ENCODE measurements at regions of chr22 and their contacts with region 1.

Region 1: DNA sequence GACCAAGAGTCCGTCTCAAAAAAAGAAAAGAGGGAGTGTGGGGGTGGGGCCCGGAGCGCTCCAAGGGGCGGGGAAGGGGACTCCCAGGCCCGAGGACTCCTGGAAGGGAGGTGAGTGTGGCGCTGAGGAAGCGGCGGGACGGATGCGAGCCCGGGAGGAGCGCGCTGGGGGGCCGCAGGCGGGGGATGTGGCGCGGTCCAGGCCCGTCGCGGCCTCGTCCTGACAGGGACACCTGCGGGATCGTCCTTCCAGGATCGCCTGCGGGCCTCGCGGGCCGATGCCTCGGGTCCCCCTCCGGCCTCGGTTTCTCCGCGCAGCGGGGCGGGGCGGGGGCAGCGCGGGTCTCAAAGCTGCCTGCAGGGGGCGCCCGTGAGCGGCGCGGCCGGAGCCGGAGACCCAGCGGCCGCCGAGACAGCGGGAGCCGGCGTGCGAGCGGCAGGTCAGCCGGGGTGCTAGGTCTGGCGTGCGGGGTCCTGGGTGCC is 3.8 kb upstream of the ADORA2A start:
- DNase-seq: peak in 8 of 9 donors; percentile 35 to 87 (median 58)
- ATAC-seq: peak; percentile 52
- H3K4me3 ChIP-seq: no peak overlapping the region
- H3K4me3 Mint-ChIP-seq: peak overlapping the region; percentile 49 to 90 (median 62)
- H3K27ac ChIP-seq: peak overlapping the region; percentile 56
- H3K27ac Mint-ChIP-seq: peak overlapping the region in 5 of 9 donors; percentile 43 to 86 (median 74)
- H3K4me1 ChIP-seq: peaks cover 19 to 29% of the 10 kb centered on the region in 2 donors
- H3K4me1 Mint-ChIP-seq: peaks cover 28 to 39% (median 37%) of the 10 kb centered on the region in 7 donors
- H3K27me3 ChIP-seq: no peaks in the 10 kb centered on the region
- H3K27me3 Mint-ChIP-seq: peaks cover 0 to 5% (median 0%) of the 10 kb centered on the region in 5 donors

Region 2: GRCh38 chr22:24325105-24325757 is 98.3 kb before region 1 on chr22:
- CTCF ChIA-PET with region 1: no interaction called
- POLR2A ChIA-PET with region 1: no interaction called
- intact Hi-C with region 1: loop called (anchors 1 to 2 kb)
- DNase-seq: peak in 7 of 9 donors; percentile 27 to 62 (median 51)
- ATAC-seq: peak; percentile 90
- H3K4me3 ChIP-seq: no peak overlapping the region
- H3K4me3 Mint-ChIP-seq: peak overlapping the region in 4 of 10 donors; percentile 1 to 66 (median 36)
- H3K27ac ChIP-seq: no peak overlapping the region
- H3K27ac Mint-ChIP-seq: peak overlapping the region in 6 of 9 donors; percentile 2 to 51 (median 41)
- H3K4me1 ChIP-seq: peaks cover 0 to 13% of the 10 kb centered on the region in 2 donors
- H3K4me1 Mint-ChIP-seq: peaks cover 14 to 46% (median 40%) of the 10 kb centered on the region in 7 donors
- H3K27me3 ChIP-seq: no peaks in the 10 kb centered on the region
- H3K27me3 Mint-ChIP-seq: no peaks in the 10 kb centered on the region

Region 3: GRCh38 chr22:24338726-24339451 is 84.7 kb before region 1 on chr22:
- CTCF ChIA-PET with region 1: no interaction called
- POLR2A ChIA-PET with region 1: no interaction called
- intact Hi-C with region 1: no loop called
- DNase-seq: no peak
- ATAC-seq: no peak
- H3K4me3 ChIP-seq: no peak overlapping the region
- H3K4me3 Mint-ChIP-seq: no peak overlapping the region
- H3K27ac ChIP-seq: no peak overlapping the region
- H3K27ac Mint-ChIP-seq: no peak overlapping the region
- H3K4me1 ChIP-seq: no peaks in the 10 kb centered on the region
- H3K4me1 Mint-ChIP-seq: peaks cover 8 to 20% (median 10%) of the 10 kb centered on the region in 7 donors
- H3K27me3 ChIP-seq: no peaks in the 10 kb centered on the region
- H3K27me3 Mint-ChIP-seq: no peaks in the 10 kb centered on the region

Region 4: DNA sequence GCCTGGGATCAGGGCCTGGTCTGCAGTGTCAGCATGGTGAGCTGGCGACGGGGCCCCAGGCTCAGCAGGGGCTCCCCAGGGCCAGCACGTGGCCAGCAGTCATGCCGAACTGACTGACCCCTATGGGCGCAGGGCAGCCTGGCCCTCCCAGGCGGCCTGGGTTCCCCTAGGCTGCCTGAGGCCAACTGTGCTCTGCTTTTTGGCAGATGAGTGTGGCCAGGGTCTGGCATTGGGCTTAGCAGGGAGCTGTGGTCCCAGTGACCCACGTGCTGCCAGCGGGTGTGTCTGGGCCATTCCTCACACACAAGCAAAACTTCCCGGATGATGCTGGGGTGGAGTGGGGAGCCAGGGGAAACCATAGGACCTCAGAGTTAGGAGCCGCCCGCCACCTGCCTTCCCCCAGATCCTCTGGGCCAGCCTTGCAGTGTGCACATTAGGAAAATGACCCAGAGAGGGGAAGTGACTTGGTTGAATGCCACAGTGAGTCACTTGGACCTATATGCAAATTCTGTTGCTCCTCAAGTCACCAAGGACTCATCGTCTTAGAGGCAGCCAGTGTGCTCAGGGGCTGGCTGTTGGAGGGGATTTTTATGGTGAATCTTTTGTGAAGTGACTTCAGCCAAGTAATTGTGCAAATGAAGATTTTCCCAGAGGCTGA is 10.4 kb after region 1 on chr22:
- CTCF ChIA-PET with region 1: interaction called, 15 read pairs
- POLR2A ChIA-PET with region 1: interaction called, 32 read pairs
- intact Hi-C with region 1: loop called (anchors 1 kb)
- DNase-seq: no peak
- ATAC-seq: peak; percentile 75
- H3K4me3 ChIP-seq: peak overlapping the region; percentile 7
- H3K4me3 Mint-ChIP-seq: peak overlapping the region; percentile 73 to 84 (median 78)
- H3K27ac ChIP-seq: peak overlapping the region; percentile 97
- H3K27ac Mint-ChIP-seq: peak overlapping the region; percentile 85 to 97 (median 94)
- H3K4me1 ChIP-seq: peaks cover 87 to 88% of the 10 kb centered on the region in 2 donors
- H3K4me1 Mint-ChIP-seq: peaks cover 48 to 95% (median 86%) of the 10 kb centered on the region in 7 donors
- H3K27me3 ChIP-seq: no peaks in the 10 kb centered on the region
- H3K27me3 Mint-ChIP-seq: no peaks in the 10 kb centered on the region

Region 5: GRCh38 chr22:24445481-24446259 is 22.1 kb after region 1 on chr22:
- CTCF ChIA-PET with region 1: no interaction called
- POLR2A ChIA-PET with region 1: interaction called, 14 read pairs
- intact Hi-C with region 1: loop called in 1 of 2 experiments (anchors 2 kb)
- DNase-seq: no peak
- ATAC-seq: peak; percentile 33
- H3K4me3 ChIP-seq: no peak overlapping the region
- H3K4me3 Mint-ChIP-seq: no peak overlapping the region
- H3K27ac ChIP-seq: no peak overlapping the region
- H3K27ac Mint-ChIP-seq: peak overlapping the region in 3 of 9 donors; percentile 15 to 51 (median 43)
- H3K4me1 ChIP-seq: peaks cover 0 to 3% of the 10 kb centered on the region in 2 donors
- H3K4me1 Mint-ChIP-seq: peaks cover 22 to 45% (median 32%) of the 10 kb centered on the region in 7 donors
- H3K27me3 ChIP-seq: no peaks in the 10 kb centered on the region
- H3K27me3 Mint-ChIP-seq: no peaks in the 10 kb centered on the region

Region 6: DNA sequence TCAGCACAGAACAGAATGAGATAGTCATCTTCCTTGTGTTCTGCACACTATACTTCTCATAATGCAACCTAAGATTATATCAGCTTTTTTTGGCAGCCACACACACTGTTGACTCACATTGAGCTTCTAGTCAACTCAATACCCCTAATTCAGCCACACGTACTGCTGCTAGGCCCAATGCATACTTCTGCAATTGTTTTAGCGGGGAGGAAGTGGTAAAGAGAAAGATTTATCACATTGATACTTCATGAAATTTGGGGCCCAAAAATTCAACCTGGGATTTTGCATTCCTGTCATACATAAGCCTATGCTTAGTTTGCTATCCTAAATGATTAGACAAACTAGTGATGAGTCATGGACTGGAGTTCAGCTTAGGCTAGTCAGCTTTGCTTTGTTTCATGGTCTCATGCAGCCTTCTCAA is 63.0 kb after region 1 on chr22:
- CTCF ChIA-PET with region 1: interaction called, 23 read pairs
- POLR2A ChIA-PET with region 1: interaction called, 3 read pairs
- intact Hi-C with region 1: loop called in 1 of 2 experiments (anchors 1 kb)
- DNase-seq: no peak
- ATAC-seq: peak; percentile 74
- H3K4me3 ChIP-seq: no peak overlapping the region
- H3K4me3 Mint-ChIP-seq: no peak overlapping the region
- H3K27ac ChIP-seq: no peak overlapping the region
- H3K27ac Mint-ChIP-seq: peak overlapping the region in 1 of 9 donors; percentile 10
- H3K4me1 ChIP-seq: no peaks in the 10 kb centered on the region
- H3K4me1 Mint-ChIP-seq: peaks cover 0 to 20% (median 0%) of the 10 kb centered on the region in 7 donors
- H3K27me3 ChIP-seq: no peaks in the 10 kb centered on the region
- H3K27me3 Mint-ChIP-seq: peaks cover 0 to 12% (median 0%) of the 10 kb centered on the region in 5 donors

Region 7: DNA sequence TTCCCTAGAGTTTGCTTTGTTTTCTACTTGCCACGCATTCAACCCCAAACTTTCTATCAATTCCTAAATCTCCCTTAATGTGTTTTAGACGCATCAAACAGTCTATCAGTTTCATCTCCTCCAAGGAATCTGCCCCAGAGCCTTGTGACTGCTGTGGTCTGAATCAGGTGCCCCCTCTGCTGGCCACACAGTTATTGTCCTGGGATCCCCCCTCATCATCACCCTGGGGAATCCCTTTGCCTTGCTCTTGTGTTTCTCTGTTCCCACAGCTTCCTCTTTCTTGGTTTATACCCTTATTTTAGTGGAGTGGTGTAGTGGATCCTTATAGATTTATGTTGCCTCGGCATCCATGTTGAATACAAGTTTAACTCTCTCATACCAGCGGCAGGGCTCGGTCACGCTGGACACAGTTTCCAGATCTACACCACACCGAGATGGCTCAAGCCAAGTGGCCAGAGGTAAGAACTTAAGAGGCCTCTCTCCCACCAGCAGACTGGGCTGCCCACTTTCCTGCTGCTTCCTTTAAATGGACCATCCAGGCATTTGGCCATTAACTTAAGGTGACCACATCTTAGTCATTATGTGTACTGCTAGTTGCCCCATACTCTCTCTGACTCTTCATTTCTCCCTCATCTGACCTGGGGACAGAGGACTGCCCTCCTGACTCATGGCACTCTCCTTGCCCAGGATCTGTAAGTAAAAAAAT is 79.7 kb after region 1 on chr22:
- CTCF ChIA-PET with region 1: interaction called, 17 read pairs
- POLR2A ChIA-PET with region 1: interaction called, 3 read pairs
- intact Hi-C with region 1: loop called (anchors 1 kb)
- DNase-seq: peak; percentile 14 to 58 (median 40)
- ATAC-seq: peak; percentile 88
- H3K4me3 ChIP-seq: no peak overlapping the region
- H3K4me3 Mint-ChIP-seq: no peak overlapping the region
- H3K27ac ChIP-seq: no peak overlapping the region
- H3K27ac Mint-ChIP-seq: peak overlapping the region in 2 of 9 donors; percentile 21 to 78
- H3K4me1 ChIP-seq: peaks cover 0 to 1% of the 10 kb centered on the region in 2 donors
- H3K4me1 Mint-ChIP-seq: peaks cover 4 to 26% (median 8%) of the 10 kb centered on the region in 7 donors
- H3K27me3 ChIP-seq: no peaks in the 10 kb centered on the region
- H3K27me3 Mint-ChIP-seq: peaks cover 0 to 7% (median 0%) of the 10 kb centered on the region in 5 donors

Region 8: DNA sequence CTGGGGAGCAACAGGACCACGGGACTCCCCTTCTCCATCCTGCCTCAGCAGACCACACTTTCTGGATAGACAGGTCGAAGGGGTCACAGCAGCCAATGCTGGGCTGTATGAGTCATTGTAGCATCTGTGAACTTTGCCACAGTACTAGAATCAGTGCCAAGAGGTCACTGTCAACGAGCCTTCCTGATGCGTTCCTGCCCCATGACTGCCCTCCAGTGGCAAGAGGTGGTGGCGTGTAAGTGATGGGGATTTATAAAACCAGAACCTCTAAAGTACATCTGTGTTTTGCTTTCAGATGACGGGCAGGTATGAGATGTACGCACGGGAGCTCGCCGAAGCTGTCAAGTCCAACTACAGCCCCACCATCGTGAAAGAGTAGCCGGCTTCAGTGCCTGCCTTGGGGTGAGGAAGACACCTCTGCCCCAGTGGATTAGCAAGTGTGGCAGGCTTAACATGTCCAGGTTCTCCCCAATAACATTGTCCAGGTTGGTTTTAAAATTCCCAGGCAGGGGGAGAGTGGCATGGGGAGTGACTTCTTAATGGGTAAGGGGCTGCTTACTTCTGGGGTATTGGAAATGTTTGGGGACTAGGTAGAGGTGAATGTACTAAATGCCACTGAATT is 102.0 kb after region 1 on chr22:
- CTCF ChIA-PET with region 1: interaction called, 26 read pairs
- POLR2A ChIA-PET with region 1: interaction called, 3 read pairs
- intact Hi-C with region 1: loop called (anchors 1 kb)
- DNase-seq: peak; percentile 54 to 77 (median 71)
- ATAC-seq: peak; percentile 98
- H3K4me3 ChIP-seq: no peak overlapping the region
- H3K4me3 Mint-ChIP-seq: no peak overlapping the region
- H3K27ac ChIP-seq: no peak overlapping the region
- H3K27ac Mint-ChIP-seq: no peak overlapping the region
- H3K4me1 ChIP-seq: no peaks in the 10 kb centered on the region
- H3K4me1 Mint-ChIP-seq: peaks cover 0 to 12% (median 9%) of the 10 kb centered on the region in 7 donors
- H3K27me3 ChIP-seq: no peaks in the 10 kb centered on the region
- H3K27me3 Mint-ChIP-seq: peaks cover 0 to 7% (median 0%) of the 10 kb centered on the region in 5 donors

Measured in naive thymus-derived CD4-positive, alpha-beta T cell (primary cell).